HepG2 (cell line): ENCODE measurements at regions of chr15 and their contacts with region 1.

Region 1: DNA sequence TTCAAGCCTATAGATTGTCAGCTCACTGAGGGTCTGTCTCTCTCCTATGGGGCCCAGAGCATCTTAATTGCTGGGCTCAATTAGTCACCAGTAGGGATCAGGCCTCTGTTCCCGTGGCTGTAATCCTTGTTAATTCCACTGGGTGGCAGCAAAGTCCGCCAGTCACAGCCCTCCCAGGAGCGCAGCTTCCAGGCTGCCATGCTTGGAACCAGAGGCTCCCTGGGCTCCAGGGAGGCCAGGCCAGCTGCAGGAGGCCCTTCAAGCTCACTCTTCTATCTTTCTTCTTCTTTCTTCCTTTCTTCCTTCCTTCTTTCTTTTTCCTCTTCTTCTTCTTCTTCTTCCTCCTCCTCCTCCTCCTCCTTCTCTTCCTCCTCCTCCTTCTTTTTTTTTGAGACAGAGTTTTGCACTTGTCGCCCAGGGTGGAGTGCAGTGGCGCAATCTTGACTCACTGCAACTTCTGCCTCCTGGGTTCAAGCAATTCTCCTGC is 14.4 kb downstream of the RNU5B-1 start:
- DNase-seq: peak; percentile 68
- ATAC-seq: peak; percentile 88
- H3K4me3 ChIP-seq: no peak overlapping the region
- H3K27ac ChIP-seq: no peak overlapping the region
- H3K4me1 ChIP-seq: peaks cover 11% of the 10 kb centered on the region; the same call in 1 of the 2 replicates
- H3K27me3 ChIP-seq: no peaks in the 10 kb centered on the region; a peak in 2 of 5 replicates
- CTCF ChIP-seq: peak; percentile 95
- EP300 ChIP-seq: no peak
- POLR2A ChIP-seq: no peak
- RAD21 ChIP-seq: peak; percentile 99

Region 2: DNA sequence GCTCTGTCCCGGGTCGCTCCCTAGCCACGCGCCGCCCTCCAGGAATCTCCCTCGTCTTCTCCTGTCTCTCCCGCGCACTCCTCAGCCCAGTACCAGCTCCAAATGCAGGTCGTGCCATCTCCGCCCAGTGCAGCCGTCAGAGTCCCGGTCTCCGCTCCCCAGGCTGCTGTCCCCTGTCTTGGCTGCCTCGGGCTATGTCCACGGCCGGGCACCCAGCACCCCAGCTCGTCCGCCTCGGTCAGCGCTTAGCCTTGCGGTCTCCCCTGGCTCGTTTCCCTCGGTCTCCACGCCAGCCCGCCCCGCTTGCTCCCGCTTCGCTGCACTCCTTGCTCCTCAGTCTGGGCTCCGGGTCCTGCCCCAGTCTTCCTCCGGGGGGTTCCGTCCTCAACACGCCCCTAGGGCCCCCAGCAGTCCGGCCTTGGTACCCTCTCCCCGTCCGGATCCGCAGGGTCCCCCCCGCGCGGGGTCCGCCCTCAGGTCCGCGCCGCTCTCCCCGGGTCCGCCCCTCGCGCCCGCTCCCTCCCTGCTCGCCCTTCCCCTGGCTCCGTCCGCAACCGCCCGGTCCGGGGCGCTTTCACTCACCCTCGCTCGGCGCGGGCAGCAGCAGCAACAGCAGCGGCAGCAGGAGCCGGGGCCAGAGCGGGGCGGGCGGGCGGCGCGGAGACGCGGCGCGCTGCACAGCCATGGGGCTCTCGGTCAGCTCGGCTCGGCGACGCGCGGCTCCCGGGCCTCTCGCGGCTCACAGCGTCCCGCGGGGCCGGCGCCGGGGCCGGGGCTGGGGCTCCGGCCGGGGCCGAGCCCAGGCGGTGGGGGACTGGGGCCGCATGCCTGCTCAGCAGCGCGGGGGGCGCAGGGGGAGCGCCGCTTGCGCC is 58.4 kb after region 1 on chr15:
- CTCF ChIA-PET with region 1: interaction called, 3 read pairs
- POLR2A ChIA-PET with region 1: interaction called, 13 read pairs
- in situ Hi-C with region 1: loop called (anchors 5 kb)
- intact Hi-C with region 1: no loop called
- DNase-seq: no peak
- ATAC-seq: peak; percentile 65
- H3K4me3 ChIP-seq: peak overlapping the region; percentile 84 to 97 (median 92)
- H3K27ac ChIP-seq: peak overlapping the region; percentile 99
- H3K4me1 ChIP-seq: peaks cover 66% of the 10 kb centered on the region
- H3K27me3 ChIP-seq: no peaks in the 10 kb centered on the region; a peak in 1 of 5 replicates
- CTCF ChIP-seq: peak; percentile 7; the same call in 1 of the 2 replicates
- EP300 ChIP-seq: no peak
- POLR2A ChIP-seq: peak in 1 of 2 experiments; percentile 16; a peak in 1 of 4 replicates
- RAD21 ChIP-seq: no peak; the same call in 1 of the 2 replicates

Region 3: GRCh38 chr15:65384895-65385858 is 66.3 kb after region 1 on chr15:
- CTCF ChIA-PET with region 1: interaction called, 93 read pairs
- POLR2A ChIA-PET with region 1: interaction called, 14 read pairs
- in situ Hi-C with region 1: loop called (anchors 5 kb)
- intact Hi-C with region 1: loop called (anchors 1 kb)
- DNase-seq: peak; percentile 87
- ATAC-seq: peak; percentile 91
- H3K4me3 ChIP-seq: peak overlapping the region; percentile 44 to 80 (median 58)
- H3K27ac ChIP-seq: peak overlapping the region; percentile 71
- H3K4me1 ChIP-seq: peaks cover 42% of the 10 kb centered on the region
- H3K27me3 ChIP-seq: peaks cover 0 to 11% of the 10 kb centered on the region in 2 experiments; a peak in 2 of 5 replicates
- CTCF ChIP-seq: peak; percentile 98
- EP300 ChIP-seq: 0 out of 4 replicates have a peak, but pooled peaks have one; percentile 11 to 25
- POLR2A ChIP-seq: 0 out of 4 replicates have a peak, but pooled peaks of 1 of the 2 experiments have one; percentile 42
- RAD21 ChIP-seq: peak; percentile 96

Region 4: GRCh38 chr15:65400760-65401610 is 82.1 kb after region 1 on chr15:
- CTCF ChIA-PET with region 1: interaction called, 39 read pairs
- POLR2A ChIA-PET with region 1: interaction called, 3 read pairs
- in situ Hi-C with region 1: no loop called
- intact Hi-C with region 1: loop called (anchors 1 kb)
- DNase-seq: peak; percentile 74
- ATAC-seq: peak; percentile 95
- H3K4me3 ChIP-seq: peak overlapping the region in 1 of 3 experiments; percentile 52; a peak in 2 of 6 replicates
- H3K27ac ChIP-seq: no peak overlapping the region
- H3K4me1 ChIP-seq: peaks cover 25% of the 10 kb centered on the region
- H3K27me3 ChIP-seq: peaks cover 0 to 28% of the 10 kb centered on the region in 2 experiments; a peak in 2 of 5 replicates
- CTCF ChIP-seq: peak; percentile 92
- EP300 ChIP-seq: no peak
- POLR2A ChIP-seq: no peak
- RAD21 ChIP-seq: peak; percentile 70

Region 5: DNA sequence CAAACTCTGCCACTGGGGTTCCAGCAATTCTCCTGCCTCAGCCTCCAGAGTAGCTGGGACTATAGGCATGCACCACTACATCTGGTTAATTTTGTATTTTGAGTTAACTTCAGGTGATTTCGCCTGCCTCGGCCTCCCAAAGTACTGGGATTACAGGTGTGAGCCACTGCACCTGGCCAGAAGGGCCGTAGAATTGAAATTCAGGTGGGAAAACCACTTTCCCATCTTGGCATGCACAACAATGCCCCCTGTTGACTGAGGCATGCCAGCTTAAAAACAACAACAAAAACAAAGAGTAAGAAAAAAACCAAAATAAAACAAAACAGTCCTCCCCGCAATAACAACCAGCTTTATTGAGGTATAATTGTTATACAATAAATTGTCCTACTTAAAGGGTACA is 517.8 kb after region 1 on chr15:
- CTCF ChIA-PET with region 1: no interaction called
- POLR2A ChIA-PET with region 1: no interaction called
- in situ Hi-C with region 1: no loop called
- intact Hi-C with region 1: no loop called
- DNase-seq: no peak
- ATAC-seq: no peak
- H3K4me3 ChIP-seq: no peak overlapping the region
- H3K27ac ChIP-seq: no peak overlapping the region
- H3K4me1 ChIP-seq: peaks cover 79% of the 10 kb centered on the region
- H3K27me3 ChIP-seq: no peaks in the 10 kb centered on the region
- CTCF ChIP-seq: peak; percentile 56
- EP300 ChIP-seq: no peak
- POLR2A ChIP-seq: no peak
- RAD21 ChIP-seq: no peak